IMR-90 (cell line): ENCODE measurements at regions of chr18 and their contacts with region 1.

Region 1: DNA sequence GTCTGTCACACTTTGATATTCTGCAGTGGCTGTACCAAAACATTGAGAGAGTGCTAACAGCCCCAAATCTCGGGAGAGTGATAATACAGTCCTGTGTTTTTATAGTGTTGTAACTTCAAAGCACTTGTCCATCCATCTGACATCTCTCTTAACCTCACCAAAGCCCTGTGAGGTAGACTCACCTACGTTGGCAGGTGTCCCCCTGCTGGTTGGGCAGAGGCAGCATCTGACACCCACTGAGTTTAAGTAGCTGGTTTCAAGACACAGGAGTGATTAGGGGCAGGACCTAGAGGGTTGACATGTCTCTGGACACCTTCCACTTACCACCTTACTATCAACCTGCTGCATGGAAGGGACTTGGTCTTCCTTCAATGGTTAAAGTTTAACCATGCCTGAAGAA is 22.9 kb downstream of the COLEC12 start:
- DNase-seq: no peak
- ATAC-seq: no peak
- H3K4me3 ChIP-seq: no peak overlapping the region
- H3K27ac ChIP-seq: no peak overlapping the region
- H3K4me1 ChIP-seq: peaks cover 25% of the 10 kb centered on the region
- H3K27me3 ChIP-seq: no peaks in the 10 kb centered on the region
- CTCF ChIP-seq: no peak
- POLR2A ChIP-seq: no peak
- RAD21 ChIP-seq: no peak

Region 2: GRCh38 chr18:148841-149240 is 328.7 kb before region 1 on chr18:
- CTCF ChIA-PET with region 1: no interaction called
- POLR2A ChIA-PET with region 1: no interaction called
- dilution Hi-C with region 1: no loop called
- in situ Hi-C with region 1: no loop called
- intact Hi-C with region 1: no loop called
- DNase-seq: no peak
- ATAC-seq: no peak
- H3K4me3 ChIP-seq: no peak overlapping the region
- H3K27ac ChIP-seq: no peak overlapping the region
- H3K4me1 ChIP-seq: no peaks in the 10 kb centered on the region
- H3K27me3 ChIP-seq: peaks cover 4% of the 10 kb centered on the region
- CTCF ChIP-seq: no peak
- POLR2A ChIP-seq: no peak
- RAD21 ChIP-seq: no peak

Region 3: DNA sequence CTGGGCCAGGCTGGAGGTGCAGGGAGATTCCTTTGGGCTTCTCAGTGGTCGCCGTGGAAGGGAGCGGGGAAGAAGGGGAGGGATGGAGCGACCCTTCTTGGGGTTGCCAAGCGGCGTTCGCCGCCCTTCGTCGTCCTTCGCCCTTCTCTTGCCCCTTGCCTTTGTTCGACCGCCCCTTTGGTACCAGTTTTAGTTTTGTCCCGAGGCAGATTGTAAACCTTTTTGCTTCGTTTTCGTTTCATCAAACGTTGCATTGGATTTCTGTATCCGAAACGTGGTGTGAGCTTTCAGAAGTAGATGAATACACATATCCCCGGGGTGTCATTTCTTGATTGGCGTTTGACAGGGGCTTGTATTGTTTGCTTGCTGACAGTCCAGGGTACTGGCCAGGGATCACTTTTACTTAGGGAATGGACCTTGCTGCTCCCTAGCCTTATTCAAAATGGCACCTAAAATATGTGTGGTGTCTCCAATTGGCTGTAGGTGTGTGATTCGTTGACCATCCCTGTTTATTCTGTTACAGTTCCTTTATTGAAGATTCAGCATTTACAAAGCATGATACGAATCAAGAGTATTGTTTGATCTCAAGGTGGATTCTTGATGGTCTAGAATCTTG is 318.4 kb before region 1 on chr18:
- CTCF ChIA-PET with region 1: no interaction called
- POLR2A ChIA-PET with region 1: no interaction called
- dilution Hi-C with region 1: no loop called
- in situ Hi-C with region 1: no loop called
- intact Hi-C with region 1: no loop called
- DNase-seq: peak; percentile 18
- ATAC-seq: no peak
- H3K4me3 ChIP-seq: peak overlapping the region; percentile 90
- H3K27ac ChIP-seq: peak overlapping the region; percentile 67
- H3K4me1 ChIP-seq: no peaks in the 10 kb centered on the region
- H3K27me3 ChIP-seq: no peaks in the 10 kb centered on the region
- CTCF ChIP-seq: no peak
- POLR2A ChIP-seq: no peak
- RAD21 ChIP-seq: no peak

Region 4: GRCh38 chr18:415617-416612 is 61.6 kb before region 1 on chr18:
- CTCF ChIA-PET with region 1: no interaction called
- POLR2A ChIA-PET with region 1: no interaction called
- dilution Hi-C with region 1: no loop called
- in situ Hi-C with region 1: no loop called
- intact Hi-C with region 1: loop called (anchors 5 kb)
- DNase-seq: peak; percentile 81
- ATAC-seq: peak; percentile 86
- H3K4me3 ChIP-seq: no peak overlapping the region
- H3K27ac ChIP-seq: peak overlapping the region; percentile 78
- H3K4me1 ChIP-seq: peaks cover 10% of the 10 kb centered on the region
- H3K27me3 ChIP-seq: no peaks in the 10 kb centered on the region
- CTCF ChIP-seq: no peak
- POLR2A ChIP-seq: no peak
- RAD21 ChIP-seq: no peak

Region 5: DNA sequence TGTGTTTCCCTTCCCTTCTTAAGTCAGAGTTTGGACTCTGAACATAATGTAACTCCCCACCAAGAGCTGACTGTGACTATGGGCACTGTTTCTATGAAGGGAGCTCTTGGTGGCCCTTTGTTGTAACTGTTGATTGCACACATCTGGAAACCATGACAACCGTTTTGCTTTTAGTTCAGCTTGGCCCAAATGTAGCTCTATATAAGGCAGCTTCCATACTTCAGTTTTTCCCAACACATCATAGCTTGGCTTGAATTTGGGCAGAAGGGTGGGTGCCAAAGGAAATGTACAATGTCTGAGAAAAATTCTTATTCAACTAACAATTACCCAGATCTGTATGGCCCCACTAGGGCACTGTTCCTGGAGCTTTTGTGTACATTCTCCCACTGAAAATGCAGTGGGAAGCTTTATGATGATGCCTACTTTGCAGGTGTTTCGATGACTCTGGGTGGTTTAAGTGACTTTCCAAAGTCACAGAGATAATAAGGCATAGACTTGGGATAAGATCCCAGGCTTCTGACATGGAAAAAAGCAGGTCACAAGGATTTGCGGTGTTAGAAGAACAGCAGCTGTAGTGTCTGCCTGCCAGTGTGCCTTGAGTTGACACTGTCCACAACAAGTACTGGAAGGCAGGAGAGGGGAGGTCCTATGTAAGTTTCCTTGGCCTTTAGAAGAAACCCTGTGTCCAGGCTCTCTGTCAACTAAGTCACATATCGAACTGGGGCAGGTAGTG is 100.2 kb after region 1 on chr18:
- CTCF ChIA-PET with region 1: no interaction called
- POLR2A ChIA-PET with region 1: no interaction called
- dilution Hi-C with region 1: no loop called
- in situ Hi-C with region 1: no loop called
- intact Hi-C with region 1: no loop called
- DNase-seq: no peak
- ATAC-seq: no peak
- H3K4me3 ChIP-seq: no peak overlapping the region
- H3K27ac ChIP-seq: no peak overlapping the region
- H3K4me1 ChIP-seq: no peaks in the 10 kb centered on the region
- H3K27me3 ChIP-seq: peaks cover 40% of the 10 kb centered on the region
- CTCF ChIP-seq: no peak
- POLR2A ChIP-seq: no peak
- RAD21 ChIP-seq: no peak